GM12878 (cell line): ENCODE measurements at regions of chr2 and their contacts with region 1.

Region 1: GRCh38 chr2:156538083-156538504 is 101.9 kb downstream of the GPD2 start:
- DNase-seq: peak; percentile 53
- ATAC-seq: peak; percentile 87
- H3K4me3 ChIP-seq: no peak overlapping the region
- H3K27ac ChIP-seq: peak overlapping the region; percentile 69
- H3K4me1 ChIP-seq: peaks cover 49% of the 10 kb centered on the region
- H3K27me3 ChIP-seq: no peaks in the 10 kb centered on the region
- CTCF ChIP-seq: no peak
- EP300 ChIP-seq: no peak
- POLR2A ChIP-seq: peak; percentile 49; the same call in 1 of the 2 replicates
- RAD21 ChIP-seq: no peak

Region 2: DNA sequence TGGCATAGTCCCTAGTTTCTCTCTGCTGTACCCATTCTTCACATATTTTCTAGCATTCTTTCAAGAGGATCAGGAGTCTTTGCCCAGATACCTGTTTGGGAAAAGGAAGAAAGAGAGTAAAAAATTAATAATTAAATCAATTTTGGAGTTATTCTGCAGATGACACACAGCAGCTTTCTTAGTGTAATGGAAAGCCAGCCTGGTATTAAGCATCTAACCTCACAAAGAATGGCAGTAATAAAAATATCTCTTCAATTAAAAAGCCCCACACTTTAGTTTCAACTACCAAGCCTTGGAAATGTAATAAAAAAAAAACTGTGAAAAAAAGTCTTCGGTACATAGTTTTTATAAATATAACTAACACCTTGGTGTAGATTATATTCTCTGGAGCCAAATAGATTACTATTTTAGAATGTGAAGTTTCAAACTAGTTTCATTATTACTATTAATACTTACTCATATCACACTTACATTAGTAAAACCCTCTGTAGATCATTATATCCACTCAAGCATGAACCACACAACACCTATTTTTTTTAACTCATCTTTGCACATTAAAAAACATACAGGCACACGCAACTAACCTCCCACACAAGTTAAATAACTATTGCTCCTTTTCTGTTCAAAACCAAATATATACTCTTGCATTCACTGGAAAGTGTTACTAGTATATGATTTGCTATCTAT is 11.0 kb before region 1 on chr2:
- CTCF ChIA-PET with region 1: interaction called, 3 read pairs
- POLR2A ChIA-PET with region 1: interaction called, 10 read pairs
- RAD21 ChIA-PET with region 1: interaction called, 9 read pairs
- SMC1A ChIA-PET with region 1: interaction called, 6 read pairs
- in situ Hi-C with region 1: no loop called
- intact Hi-C with region 1: loop called (anchors 1 kb)
- DNase-seq: no peak
- ATAC-seq: peak; percentile 94
- H3K4me3 ChIP-seq: no peak overlapping the region
- H3K27ac ChIP-seq: peak overlapping the region; percentile 81
- H3K4me1 ChIP-seq: peaks cover 16% of the 10 kb centered on the region
- H3K27me3 ChIP-seq: no peaks in the 10 kb centered on the region
- CTCF ChIP-seq: no peak
- EP300 ChIP-seq: peak; percentile 96 to 99
- POLR2A ChIP-seq: no peak
- RAD21 ChIP-seq: no peak

Region 3: DNA sequence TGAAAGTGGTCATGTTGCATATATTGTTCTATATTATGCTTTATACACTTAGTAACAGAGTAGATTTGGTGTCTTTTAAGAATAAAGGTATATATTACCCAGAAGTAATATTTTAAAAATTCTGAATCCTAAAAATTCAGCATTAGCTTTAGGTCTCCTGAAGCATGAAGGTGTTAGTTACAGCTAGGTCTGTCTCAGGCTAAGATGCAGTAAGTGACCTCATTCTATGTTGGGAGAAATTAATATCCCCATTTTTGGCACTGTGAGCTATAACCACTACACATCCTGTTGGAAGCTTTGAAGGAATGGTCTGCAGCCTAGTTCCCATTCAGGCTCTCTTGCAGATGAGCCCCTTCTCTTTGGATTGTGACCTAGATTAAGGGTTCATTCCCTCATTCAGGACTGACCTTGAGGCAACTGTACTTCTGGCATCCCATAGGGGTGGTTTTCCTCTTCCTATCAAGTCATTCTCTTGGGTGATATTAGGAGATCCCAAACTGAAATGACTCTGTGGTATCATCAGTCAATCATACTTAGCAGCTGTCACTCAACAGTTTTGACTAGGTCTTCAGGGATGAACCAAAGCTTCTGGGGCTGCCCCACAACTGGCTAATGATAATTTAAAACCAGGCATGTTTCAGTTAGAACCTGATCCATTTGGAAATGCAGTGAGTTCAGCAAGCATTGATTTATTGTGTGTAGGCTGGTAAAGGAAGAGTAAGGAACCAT is 15.8 kb after region 1 on chr2:
- CTCF ChIA-PET with region 1: interaction called, 10 read pairs
- POLR2A ChIA-PET with region 1: interaction called, 7 read pairs
- RAD21 ChIA-PET with region 1: interaction called, 3 read pairs
- SMC1A ChIA-PET with region 1: interaction called, 65 read pairs
- in situ Hi-C with region 1: no loop called
- intact Hi-C with region 1: no loop called
- DNase-seq: no peak
- ATAC-seq: peak; percentile 49; the same call in 2 of the 3 replicates
- H3K4me3 ChIP-seq: no peak overlapping the region
- H3K27ac ChIP-seq: no peak overlapping the region
- H3K4me1 ChIP-seq: no peaks in the 10 kb centered on the region
- H3K27me3 ChIP-seq: no peaks in the 10 kb centered on the region
- CTCF ChIP-seq: no peak
- EP300 ChIP-seq: no peak
- POLR2A ChIP-seq: no peak
- RAD21 ChIP-seq: no peak

Region 4: GRCh38 chr2:156565066-156565710 is 27.1 kb after region 1 on chr2:
- CTCF ChIA-PET with region 1: interaction called, 5 read pairs
- POLR2A ChIA-PET with region 1: interaction called, 5 read pairs
- RAD21 ChIA-PET with region 1: interaction called, 7 read pairs
- SMC1A ChIA-PET with region 1: interaction called, 68 read pairs
- in situ Hi-C with region 1: no loop called
- intact Hi-C with region 1: no loop called
- DNase-seq: no peak
- ATAC-seq: peak; percentile 68
- H3K4me3 ChIP-seq: no peak overlapping the region
- H3K27ac ChIP-seq: no peak overlapping the region
- H3K4me1 ChIP-seq: no peaks in the 10 kb centered on the region
- H3K27me3 ChIP-seq: no peaks in the 10 kb centered on the region
- CTCF ChIP-seq: no peak
- EP300 ChIP-seq: no peak
- POLR2A ChIP-seq: no peak
- RAD21 ChIP-seq: no peak

Region 5: DNA sequence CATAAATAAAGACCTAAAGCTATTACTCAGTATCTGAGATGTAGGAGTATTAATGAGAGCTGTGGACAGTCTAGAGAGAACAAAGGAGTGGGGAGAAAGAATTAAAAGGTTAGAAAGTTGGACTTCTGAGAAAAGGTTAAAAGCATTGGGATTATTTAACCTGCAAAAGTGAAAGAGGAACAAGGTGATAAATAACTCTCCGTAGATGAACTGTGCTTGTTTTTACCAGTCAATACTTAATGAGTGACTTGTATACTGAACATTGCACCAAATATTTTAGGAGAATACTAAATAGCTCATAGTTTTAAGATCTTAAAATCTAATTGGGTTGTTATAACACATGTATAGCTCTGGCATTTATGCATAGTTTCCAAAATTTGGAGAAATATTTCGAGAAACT is 35.6 kb after region 1 on chr2:
- CTCF ChIA-PET with region 1: interaction called, 4 read pairs
- POLR2A ChIA-PET with region 1: interaction called, 3 read pairs
- RAD21 ChIA-PET with region 1: interaction called, 5 read pairs
- SMC1A ChIA-PET with region 1: interaction called, 10 read pairs
- in situ Hi-C with region 1: no loop called
- intact Hi-C with region 1: no loop called
- DNase-seq: no peak
- ATAC-seq: peak; percentile 85
- H3K4me3 ChIP-seq: no peak overlapping the region
- H3K27ac ChIP-seq: peak overlapping the region; percentile 18; the same call in 1 of the 2 replicates
- H3K4me1 ChIP-seq: peaks cover 10% of the 10 kb centered on the region; the same call in 1 of the 2 replicates
- H3K27me3 ChIP-seq: no peaks in the 10 kb centered on the region
- CTCF ChIP-seq: no peak
- EP300 ChIP-seq: no peak
- POLR2A ChIP-seq: no peak
- RAD21 ChIP-seq: no peak